ENCODE measurements at regions of chr5 and their contacts with region 1.

Region 1: GRCh38 chr5:3118340-3118739 is 366.9 kb upstream of the IRX2 start:
- DNase-seq: no peak
- H3K4me3 Mint-ChIP-seq: no peak overlapping the region
- H3K27ac Mint-ChIP-seq: no peak overlapping the region
- H3K4me1 Mint-ChIP-seq: no peaks in the 10 kb centered on the region
- H3K27me3 Mint-ChIP-seq: peaks cover 12% of the 10 kb centered on the region

Region 2: GRCh38 chr5:2739360-2740050 is 378.8 kb before region 1 on chr5:
- intact Hi-C with region 1: loop called (anchors 5 kb)
- DNase-seq: no peak
- H3K4me3 Mint-ChIP-seq: no peak overlapping the region
- H3K27ac Mint-ChIP-seq: no peak overlapping the region
- H3K4me1 Mint-ChIP-seq: no peaks in the 10 kb centered on the region
- H3K27me3 Mint-ChIP-seq: peaks cover 47% of the 10 kb centered on the region

Region 3: GRCh38 chr5:3437177-3437576 is 318.8 kb after region 1 on chr5:
- intact Hi-C with region 1: no loop called
- DNase-seq: no peak
- H3K4me3 Mint-ChIP-seq: no peak overlapping the region
- H3K27ac Mint-ChIP-seq: no peak overlapping the region
- H3K4me1 Mint-ChIP-seq: no peaks in the 10 kb centered on the region
- H3K27me3 Mint-ChIP-seq: no peaks in the 10 kb centered on the region

Region 4: DNA sequence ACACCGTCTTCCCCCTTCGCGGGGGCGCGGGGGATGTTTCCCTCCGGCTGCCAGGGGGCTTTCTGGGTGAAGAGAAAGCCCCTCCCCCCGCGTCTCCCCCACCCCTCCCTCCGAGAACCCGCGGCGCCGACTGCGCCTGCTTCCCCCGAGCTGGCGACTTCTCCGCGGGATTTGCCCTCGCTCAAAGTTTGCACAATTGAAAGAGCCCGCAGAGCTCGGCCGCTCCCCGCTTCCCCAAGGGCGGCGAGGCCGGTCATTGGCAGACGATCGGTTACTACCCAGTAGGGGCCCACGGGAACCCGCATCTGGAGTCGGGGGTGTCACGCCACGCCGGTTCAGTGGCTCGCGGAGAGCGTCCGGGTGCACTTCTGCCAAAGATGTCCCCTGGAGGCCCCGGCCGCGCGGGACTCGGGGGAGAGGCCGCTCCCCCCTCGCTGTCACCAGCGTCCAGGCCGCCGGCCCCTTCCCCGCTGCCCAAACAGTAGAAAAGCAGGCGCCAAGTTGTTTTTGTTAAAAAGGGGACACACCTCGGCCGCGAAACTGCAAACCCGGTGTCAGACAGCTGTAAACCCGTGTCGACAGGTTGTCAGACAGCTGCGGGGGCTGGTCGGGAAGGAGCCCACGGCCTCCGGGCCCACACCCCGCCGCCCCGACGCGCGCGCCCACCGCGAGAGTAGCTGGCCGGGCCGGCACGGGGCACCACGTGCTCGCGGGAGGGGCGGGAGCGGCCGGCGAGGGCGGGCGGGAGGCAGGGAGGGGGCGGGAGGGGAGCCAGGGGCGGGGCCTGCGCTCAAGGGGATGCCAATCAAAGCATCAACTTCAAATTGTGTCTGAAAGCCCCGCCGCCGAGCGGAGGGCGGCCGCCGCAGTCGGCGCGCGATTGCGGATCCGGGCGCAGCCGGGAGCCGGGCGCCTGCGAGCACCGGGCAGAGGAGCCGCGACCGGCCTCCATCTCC is 476.9 kb after region 1 on chr5 and contains the start of gene IRX1:
- intact Hi-C with region 1: loop called (anchors 5 kb)
- DNase-seq: no peak
- H3K4me3 Mint-ChIP-seq: no peak within 1 kb of the TSS
- H3K27ac Mint-ChIP-seq: no peak within 1 kb of the TSS
- H3K4me1 Mint-ChIP-seq: no peaks in the 10 kb centered on the region
- H3K27me3 Mint-ChIP-seq: peaks cover 57% of the 10 kb centered on the region
- total RNA-seq, gene IRX1: not detected in 2 replicates

Region 5: GRCh38 chr5:3639175-3639574 is 520.8 kb after region 1 on chr5:
- intact Hi-C with region 1: no loop called
- DNase-seq: no peak
- H3K4me3 Mint-ChIP-seq: no peak overlapping the region
- H3K27ac Mint-ChIP-seq: no peak overlapping the region
- H3K4me1 Mint-ChIP-seq: no peaks in the 10 kb centered on the region
- H3K27me3 Mint-ChIP-seq: no peaks in the 10 kb centered on the region

Measured in activated T-helper 2 cell treated with anti-CD3 and anti-CD28 coated beads, Interferon-gamma antibody, Interleukin-2, Interleukin-4, amounts not matched to agents 10 μg/mL and 5 μg/mL and 100 μg/mL, durations not matched to agents 14 hours and 24 hours and 36 hours (primary cell).